ENCODE measurements at regions of chr2 and their contacts with region 1.

Region 1: GRCh38 chr2:190648289-190649034 is 421 bp upstream of the NAB1 start:
- DNase-seq: peak; percentile 92 to 96
- H3K4me3 ChIP-seq: peak overlapping the region; percentile 57 to 98
- H3K27ac ChIP-seq: peak overlapping the region; percentile 79 to 97
- H3K4me1 ChIP-seq: peaks cover 0 to 60% (median 22%) of the 10 kb centered on the region in 4 donors
- H3K27me3 ChIP-seq: no peaks in the 10 kb centered on the region
- CTCF ChIP-seq: no peak

Region 2: DNA sequence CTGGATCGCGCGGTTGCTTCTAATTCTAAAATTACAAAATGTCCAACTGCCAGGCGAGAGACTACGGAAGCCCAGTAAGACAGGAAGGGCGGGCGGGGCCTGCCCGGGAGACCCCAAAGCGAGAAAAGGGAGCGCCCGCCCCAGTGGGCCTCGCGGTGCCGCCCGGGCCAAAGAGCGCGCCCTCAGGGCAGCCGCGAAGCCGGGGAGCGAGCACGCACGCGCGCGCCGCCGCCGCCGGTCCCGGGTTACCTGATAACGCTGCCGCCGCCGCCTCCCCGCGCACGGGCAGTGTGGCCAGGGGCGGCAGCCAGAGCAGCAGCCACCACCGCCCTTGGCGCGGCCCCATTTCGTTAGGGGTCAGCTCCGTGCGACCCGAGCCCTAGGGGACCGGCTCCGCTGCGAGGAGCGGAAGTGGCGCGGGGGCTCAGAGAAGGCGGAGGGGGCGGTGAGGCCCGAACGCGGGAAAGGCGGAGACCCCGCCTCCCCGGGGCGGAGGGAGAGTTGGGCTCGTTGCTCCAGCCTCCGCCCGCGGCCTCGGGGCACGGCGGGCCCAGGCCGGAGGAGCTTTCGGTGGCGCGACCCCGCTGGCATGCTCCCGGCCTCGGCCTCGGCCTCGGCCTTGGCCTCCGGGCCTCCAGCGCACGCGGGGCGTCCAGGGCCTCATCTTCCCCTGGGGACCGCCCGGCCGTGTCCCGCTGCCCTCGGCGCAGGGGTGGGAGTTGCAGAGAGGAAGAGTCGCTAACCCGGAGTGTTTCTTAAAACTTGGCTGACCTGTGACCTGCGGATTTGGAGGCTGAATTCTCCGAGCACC is 113.9 kb before region 1 on chr2 and contains the start of gene NEMP2:
- intact Hi-C with region 1: loop called (anchors 5 kb)
- DNase-seq: peak; percentile 70 to 89
- H3K4me3 ChIP-seq: peak within 1 kb of the TSS; percentile 72 to 82
- H3K27ac ChIP-seq: peak within 1 kb of the TSS; percentile 96 to 98
- H3K4me1 ChIP-seq: peaks cover 0 to 52% (median 21%) of the 10 kb centered on the region in 4 donors
- H3K27me3 ChIP-seq: no peaks in the 10 kb centered on the region
- CTCF ChIP-seq: peak in 1 of 2 experiments; percentile 5

Measured in tibial artery (tissue), 4 donors.